Activated CD4-positive, alpha-beta T cell treated with anti-CD3 and anti-CD28 coated beads for 36 hours (primary cell): ENCODE measurements at regions of chr1 and their contacts with region 1.

Region 1: GRCh38 chr1:103937763-103938357 is 188.2 kb downstream of the AMY1C start:
- DNase-seq: no peak
- ATAC-seq: no peak
- H3K4me3 Mint-ChIP-seq: no peak overlapping the region
- H3K27ac Mint-ChIP-seq: no peak overlapping the region
- H3K4me1 Mint-ChIP-seq: no peaks in the 10 kb centered on the region
- H3K27me3 Mint-ChIP-seq: no peaks in the 10 kb centered on the region

Region 2: DNA sequence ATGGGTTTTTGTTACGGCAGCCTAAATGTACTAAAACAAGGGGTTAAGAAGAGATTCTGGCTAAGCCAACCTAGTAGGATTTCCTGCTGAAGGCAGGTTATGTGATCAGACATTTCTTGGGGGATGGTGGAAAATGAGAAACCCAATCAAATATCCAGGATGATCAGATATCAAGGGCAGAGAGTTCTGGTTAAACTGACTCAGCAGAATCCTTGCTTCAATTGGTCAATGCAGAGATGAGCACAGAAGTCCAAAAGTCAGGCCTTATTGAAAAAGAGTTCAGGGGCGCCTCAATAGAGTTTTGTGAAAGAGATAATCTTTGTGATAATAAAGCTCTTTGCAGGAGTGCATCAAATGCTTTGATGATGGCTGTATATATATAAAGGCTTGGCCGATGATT is 48.9 kb after region 1 on chr1:
- CTCF ChIA-PET with region 1: no interaction called
- POLR2A ChIA-PET with region 1: no interaction called
- intact Hi-C with region 1: loop called in 1 of 2 experiments (anchors 5 kb)
- DNase-seq: no peak
- ATAC-seq: no peak
- H3K4me3 Mint-ChIP-seq: no peak overlapping the region
- H3K27ac Mint-ChIP-seq: no peak overlapping the region
- H3K4me1 Mint-ChIP-seq: no peaks in the 10 kb centered on the region
- H3K27me3 Mint-ChIP-seq: no peaks in the 10 kb centered on the region